WTC11 (cell line): ENCODE measurements at regions of chr5 and their contacts with region 1.

Region 1: DNA sequence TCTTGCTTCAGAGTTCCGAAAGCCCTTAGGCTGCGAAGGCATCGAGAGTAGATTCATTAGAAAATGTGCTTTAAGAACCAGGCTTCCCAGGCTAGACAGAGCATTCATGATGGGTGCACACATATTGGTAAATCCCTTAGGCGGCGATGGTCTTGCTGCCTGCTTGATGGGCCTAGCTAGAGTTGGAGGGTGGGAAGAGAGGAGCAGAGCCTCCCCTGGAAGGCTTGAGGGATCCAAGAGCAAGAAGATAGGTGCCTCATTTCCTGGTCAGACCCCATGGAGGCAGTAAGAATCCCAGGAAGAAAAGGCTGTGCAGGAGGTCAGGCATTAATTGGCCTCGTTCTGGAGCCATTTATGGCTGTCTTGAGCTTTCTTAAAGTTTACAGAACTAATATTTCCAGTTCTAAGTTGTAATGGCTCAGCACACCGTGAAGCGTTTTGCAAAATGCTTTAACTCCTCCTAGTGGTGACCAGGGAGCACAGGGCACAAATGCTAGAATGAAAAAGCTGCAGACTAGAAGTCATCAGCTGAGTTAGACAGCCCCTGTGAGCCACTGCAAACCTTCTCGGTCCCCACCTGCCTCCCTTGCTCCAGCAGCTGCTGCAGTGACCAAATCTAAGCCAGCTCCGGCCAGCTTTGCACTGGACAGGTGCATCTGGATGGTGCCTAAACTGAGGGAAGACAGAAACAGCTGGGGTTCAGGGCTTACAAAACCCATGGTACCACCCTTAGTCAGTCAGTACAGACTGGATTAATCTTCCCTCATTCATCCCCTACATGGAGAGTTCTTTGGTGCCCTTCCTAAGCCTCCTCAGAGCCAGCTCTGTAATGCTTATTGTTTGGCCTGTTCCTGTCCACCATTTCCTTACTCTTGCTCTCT is 14.7 kb downstream of the SLC45A2 start:
- DNase-seq: peak; percentile 16
- ATAC-seq: peak; percentile 92
- H3K4me3 Mint-ChIP-seq: no peak overlapping the region
- H3K27ac Mint-ChIP-seq: no peak overlapping the region
- H3K4me1 Mint-ChIP-seq: peaks cover 17% of the 10 kb centered on the region
- H3K27me3 Mint-ChIP-seq: no peaks in the 10 kb centered on the region
- CTCF ChIP-seq: no peak; the same call in 1 of the 2 replicates

Region 2: DNA sequence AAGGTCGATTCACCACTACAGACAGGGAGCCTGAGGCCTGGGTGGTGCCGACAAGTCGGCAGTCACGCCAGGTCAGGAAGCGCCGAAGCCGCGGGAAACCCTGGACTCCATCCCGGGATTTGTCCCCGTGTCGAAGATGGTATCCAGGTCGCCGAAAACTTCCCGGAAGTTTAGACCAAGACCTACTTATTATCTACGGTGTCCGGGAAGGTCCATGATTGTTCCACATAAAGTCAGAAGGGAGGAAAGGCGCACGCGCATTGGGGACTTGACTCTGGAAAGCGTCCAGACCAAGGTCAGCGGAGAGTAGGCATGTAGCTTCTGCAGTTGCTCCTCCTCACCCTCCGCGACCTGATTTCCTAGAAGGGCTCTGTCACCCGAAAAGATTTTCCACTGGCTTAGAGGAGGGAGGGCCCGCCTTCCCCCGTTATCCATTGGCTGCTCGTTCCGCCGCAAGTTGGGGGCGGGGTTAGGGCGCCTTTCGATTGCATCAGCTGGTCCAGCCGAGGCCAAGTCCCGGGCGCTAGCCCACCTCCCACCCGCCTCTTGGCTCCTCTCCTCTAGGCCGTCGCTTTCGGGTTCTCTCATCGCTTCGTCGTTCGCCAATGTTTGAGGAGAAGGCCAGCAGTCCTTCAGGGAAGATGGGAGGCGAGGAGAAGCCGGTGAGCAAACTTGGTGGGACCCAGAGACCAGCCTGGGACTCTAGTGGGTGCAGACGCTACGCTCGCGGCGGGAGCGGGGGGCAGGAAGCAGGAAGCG is 529.2 kb before region 1 on chr5 and contains the start of gene TARS1:
- CTCF ChIA-PET with region 1: interaction called, 10 read pairs
- POLR2A ChIA-PET with region 1: no interaction called
- DNase-seq: peak; percentile 98
- ATAC-seq: peak; percentile 97
- H3K4me3 Mint-ChIP-seq: no peak within 1 kb of the TSS
- H3K27ac Mint-ChIP-seq: no peak within 1 kb of the TSS
- H3K4me1 Mint-ChIP-seq: peaks cover 32% of the 10 kb centered on the region
- H3K27me3 Mint-ChIP-seq: no peaks in the 10 kb centered on the region
- CTCF ChIP-seq: no peak
- total RNA-seq, gene TARS1: 253 to 304 TPM (median 256 TPM) in 3 replicates

Region 3: DNA sequence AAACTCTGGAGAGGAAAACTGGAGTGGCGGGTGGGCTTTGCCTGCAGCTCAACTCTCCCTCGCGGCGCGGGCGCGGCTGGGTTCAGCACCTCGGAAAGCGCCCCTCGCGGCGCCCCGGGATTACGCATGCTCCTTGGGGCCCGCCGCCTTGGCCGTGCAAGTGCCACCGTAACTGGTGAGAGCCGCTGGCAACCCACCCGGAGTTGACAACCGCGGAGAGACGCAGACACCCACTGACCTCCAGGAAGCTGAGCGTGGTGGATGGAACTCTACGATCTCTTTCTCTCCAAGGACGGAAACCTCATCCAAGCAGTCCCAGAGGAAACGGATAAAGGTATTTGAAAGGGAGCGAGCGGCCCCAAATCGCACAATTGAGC is 33.8 kb before region 1 on chr5:
- CTCF ChIA-PET with region 1: interaction called, 40 read pairs
- POLR2A ChIA-PET with region 1: no interaction called
- DNase-seq: peak; percentile 87
- ATAC-seq: peak; percentile 71
- H3K4me3 Mint-ChIP-seq: peak overlapping the region; percentile 82
- H3K27ac Mint-ChIP-seq: no peak overlapping the region
- H3K4me1 Mint-ChIP-seq: peaks cover 25% of the 10 kb centered on the region
- H3K27me3 Mint-ChIP-seq: peaks cover 29% of the 10 kb centered on the region
- CTCF ChIP-seq: no peak

Region 4: GRCh38 chr5:33957577-33958150 is 12.1 kb before region 1 on chr5:
- CTCF ChIA-PET with region 1: interaction called, 20 read pairs
- POLR2A ChIA-PET with region 1: no interaction called
- DNase-seq: no peak
- ATAC-seq: no peak
- H3K4me3 Mint-ChIP-seq: no peak overlapping the region
- H3K27ac Mint-ChIP-seq: peak overlapping the region; percentile 83
- H3K4me1 Mint-ChIP-seq: peaks cover 23% of the 10 kb centered on the region
- H3K27me3 Mint-ChIP-seq: peaks cover 2% of the 10 kb centered on the region
- CTCF ChIP-seq: no peak

Region 5: DNA sequence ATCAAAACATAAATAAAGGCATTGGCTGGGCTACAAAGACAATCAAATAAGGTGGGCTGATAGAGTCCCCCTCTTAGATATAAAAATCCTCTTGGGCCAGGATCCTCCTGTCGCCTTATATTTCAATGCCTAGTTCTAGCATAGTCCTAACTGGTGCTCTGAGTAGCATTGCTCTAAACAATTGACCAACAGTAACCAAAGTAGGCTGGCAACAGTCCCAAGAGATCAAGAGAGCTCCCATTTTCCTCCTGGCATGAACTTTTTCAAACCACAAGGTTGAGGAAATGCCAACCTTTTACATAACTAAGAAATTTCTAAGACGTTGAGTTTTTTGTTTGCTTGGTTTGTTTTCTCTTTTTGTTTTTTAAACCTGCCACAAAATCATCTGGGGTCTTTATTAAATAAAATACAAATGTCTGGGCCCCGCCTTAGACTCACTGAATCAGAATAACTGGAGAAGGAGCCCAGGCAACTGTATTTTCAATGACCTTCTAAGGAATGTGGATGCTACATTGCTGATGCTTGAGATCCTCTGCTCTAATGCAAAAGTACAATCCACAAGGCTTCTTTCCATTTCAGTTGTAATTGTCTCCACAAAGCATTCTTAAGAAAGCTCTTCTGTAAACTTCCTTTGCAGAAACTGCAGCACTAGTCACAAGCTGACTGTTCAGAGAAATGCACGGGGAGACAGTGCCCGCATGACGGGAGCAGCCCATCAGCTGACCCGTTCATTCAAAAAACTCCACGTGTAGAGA is 11.8 kb after region 1 on chr5:
- CTCF ChIA-PET with region 1: interaction called, 12 read pairs
- POLR2A ChIA-PET with region 1: no interaction called
- DNase-seq: no peak
- ATAC-seq: no peak
- H3K4me3 Mint-ChIP-seq: no peak overlapping the region
- H3K27ac Mint-ChIP-seq: no peak overlapping the region
- H3K4me1 Mint-ChIP-seq: peaks cover 41% of the 10 kb centered on the region
- H3K27me3 Mint-ChIP-seq: no peaks in the 10 kb centered on the region
- CTCF ChIP-seq: no peak

Region 6: DNA sequence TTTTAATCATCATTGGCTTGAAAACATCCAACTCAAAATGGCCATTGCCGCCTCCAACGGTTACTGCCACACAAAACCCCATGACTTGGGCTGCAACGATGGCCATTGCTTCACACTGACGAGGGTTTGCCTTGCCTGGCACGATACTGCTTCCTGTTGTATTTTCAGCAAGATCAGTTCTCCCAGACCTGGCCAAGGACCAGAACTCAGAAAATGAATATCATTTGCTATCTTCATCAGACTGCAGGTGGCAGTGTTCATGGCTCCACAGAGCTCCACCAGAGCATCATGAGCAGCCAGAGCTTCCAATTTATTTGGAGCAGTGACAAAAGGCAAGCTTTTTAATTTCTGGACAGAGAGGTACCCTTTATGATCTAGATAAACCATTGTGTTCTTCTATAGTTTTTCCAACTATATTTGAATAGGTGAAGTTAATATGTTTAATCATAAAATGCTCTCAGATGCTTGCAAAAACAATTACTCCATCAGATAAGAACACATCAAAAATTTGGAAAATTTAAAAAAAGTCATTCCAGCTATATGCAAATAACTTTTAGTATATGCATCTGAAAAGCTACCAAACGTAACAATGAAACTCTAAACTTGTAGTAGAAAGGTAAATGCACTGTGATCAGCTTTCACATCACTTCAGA is 27.6 kb after region 1 on chr5:
- CTCF ChIA-PET with region 1: interaction called, 12 read pairs
- POLR2A ChIA-PET with region 1: no interaction called
- DNase-seq: no peak
- ATAC-seq: peak; percentile 81
- H3K4me3 Mint-ChIP-seq: no peak overlapping the region
- H3K27ac Mint-ChIP-seq: peak overlapping the region; percentile 73; the same call in 1 of the 2 replicates
- H3K4me1 Mint-ChIP-seq: peaks cover 31% of the 10 kb centered on the region
- H3K27me3 Mint-ChIP-seq: no peaks in the 10 kb centered on the region
- CTCF ChIP-seq: peak; percentile 24; the same call in 1 of the 2 replicates